GM12878 (cell line): ENCODE measurements at regions of chr2 and their contacts with region 1.

Region 1: GRCh38 chr2:218286570-218287459 is 5.5 kb downstream of the TMBIM1 start:
- DNase-seq: peak; percentile 72
- ATAC-seq: peak; percentile 76
- H3K4me3 ChIP-seq: peak overlapping the region; percentile 64
- H3K27ac ChIP-seq: peak overlapping the region; percentile 95
- H3K4me1 ChIP-seq: peaks cover 55% of the 10 kb centered on the region
- H3K27me3 ChIP-seq: no peaks in the 10 kb centered on the region
- CTCF ChIP-seq: no peak
- EP300 ChIP-seq: no peak
- POLR2A ChIP-seq: peak; percentile 57; the same call in 1 of the 2 replicates
- RAD21 ChIP-seq: no peak

Region 2: DNA sequence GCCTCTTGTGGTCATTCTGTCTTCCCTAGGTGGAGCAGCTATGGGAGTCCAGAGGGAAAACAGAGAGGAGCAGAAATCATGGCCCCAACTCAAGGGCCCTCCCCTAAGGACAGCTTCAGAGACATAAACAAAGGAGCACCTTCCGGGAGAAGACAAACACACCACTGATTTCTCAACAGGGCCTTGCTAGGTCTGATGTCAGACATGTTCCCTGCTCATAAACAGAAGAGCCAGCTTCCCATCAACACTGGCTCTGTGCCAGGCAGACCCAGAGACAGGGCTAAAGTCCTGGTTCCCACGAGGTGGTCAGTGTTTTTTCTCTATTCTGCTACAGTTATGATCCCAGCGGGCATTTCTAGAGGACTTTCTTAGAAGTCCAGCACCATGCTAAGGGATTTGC is 141.7 kb before region 1 on chr2:
- CTCF ChIA-PET with region 1: no interaction called
- POLR2A ChIA-PET with region 1: no interaction called
- RAD21 ChIA-PET with region 1: no interaction called
- SMC1A ChIA-PET with region 1: no interaction called
- in situ Hi-C with region 1: no loop called
- intact Hi-C with region 1: no loop called
- DNase-seq: no peak
- ATAC-seq: no peak
- H3K4me3 ChIP-seq: no peak overlapping the region
- H3K27ac ChIP-seq: no peak overlapping the region
- H3K4me1 ChIP-seq: peaks cover 1% of the 10 kb centered on the region
- H3K27me3 ChIP-seq: no peaks in the 10 kb centered on the region
- CTCF ChIP-seq: no peak
- EP300 ChIP-seq: no peak
- POLR2A ChIP-seq: no peak
- RAD21 ChIP-seq: no peak

Region 3: DNA sequence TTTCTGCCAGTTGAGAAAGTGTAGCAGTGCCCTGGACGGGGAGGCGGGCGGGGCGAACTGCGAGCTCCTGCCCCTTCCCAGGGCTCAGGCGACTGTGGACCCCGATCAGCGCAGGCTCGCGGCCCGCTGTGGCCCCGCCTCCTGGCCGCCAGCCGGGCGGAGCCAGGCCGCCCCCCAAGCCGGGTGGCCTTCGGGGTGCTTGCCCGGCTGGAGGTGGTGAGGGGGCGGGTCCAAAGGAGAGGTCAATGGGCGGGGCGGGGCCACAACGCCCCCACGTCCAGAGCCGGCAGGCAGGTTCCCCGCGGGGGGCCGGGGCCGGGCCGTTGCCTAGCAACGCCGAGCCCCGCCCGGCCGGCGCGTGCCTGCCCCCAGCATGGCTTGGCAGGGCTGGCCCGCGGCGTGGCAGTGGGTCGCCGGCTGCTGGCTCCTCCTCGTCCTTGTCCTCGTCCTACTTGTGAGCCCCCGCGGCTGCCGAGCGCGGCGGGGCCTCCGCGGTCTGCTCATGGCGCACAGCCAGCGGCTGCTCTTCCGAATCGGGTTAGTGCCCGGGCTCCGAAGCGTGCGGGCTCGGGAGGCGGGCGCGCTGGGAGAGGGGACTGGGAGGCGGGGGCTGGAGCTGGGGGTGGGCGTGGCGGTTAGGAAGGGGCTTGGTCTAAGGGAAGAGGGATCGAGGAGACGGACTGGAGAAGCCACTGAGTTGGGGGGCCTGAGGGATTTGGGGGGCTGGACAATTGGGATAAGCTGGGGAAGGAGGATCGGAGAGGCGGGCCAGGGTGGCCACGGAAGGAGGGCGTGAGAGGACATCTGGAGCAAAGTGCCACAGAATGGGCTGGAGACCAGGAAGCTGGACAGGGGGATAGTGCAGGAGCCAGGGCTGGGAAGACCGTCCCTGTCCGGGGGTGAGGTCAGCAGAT is 36.3 kb after region 1 on chr2:
- CTCF ChIA-PET with region 1: interaction called, 8 read pairs
- POLR2A ChIA-PET with region 1: interaction called, 17 read pairs
- RAD21 ChIA-PET with region 1: interaction called, 4 read pairs
- SMC1A ChIA-PET with region 1: interaction called, 5 read pairs
- in situ Hi-C with region 1: no loop called
- intact Hi-C with region 1: no loop called
- DNase-seq: no peak
- ATAC-seq: peak; percentile 87
- H3K4me3 ChIP-seq: peak overlapping the region; percentile 69
- H3K27ac ChIP-seq: no peak overlapping the region
- H3K4me1 ChIP-seq: peaks cover 15% of the 10 kb centered on the region
- H3K27me3 ChIP-seq: no peaks in the 10 kb centered on the region
- CTCF ChIP-seq: no peak
- EP300 ChIP-seq: no peak
- POLR2A ChIP-seq: peak; percentile 35; the same call in 1 of the 2 replicates
- RAD21 ChIP-seq: no peak

Region 4: GRCh38 chr2:218329027-218329825 is 42.4 kb after region 1 on chr2:
- CTCF ChIA-PET with region 1: interaction called, 7 read pairs
- POLR2A ChIA-PET with region 1: interaction called, 26 read pairs
- RAD21 ChIA-PET with region 1: interaction called, 9 read pairs
- SMC1A ChIA-PET with region 1: interaction called, 6 read pairs
- in situ Hi-C with region 1: no loop called
- intact Hi-C with region 1: no loop called
- DNase-seq: peak; percentile 77
- ATAC-seq: peak; percentile 81
- H3K4me3 ChIP-seq: peak overlapping the region; percentile 12; the same call in 1 of the 2 replicates
- H3K27ac ChIP-seq: peak overlapping the region; percentile 77
- H3K4me1 ChIP-seq: peaks cover 49% of the 10 kb centered on the region
- H3K27me3 ChIP-seq: no peaks in the 10 kb centered on the region
- CTCF ChIP-seq: no peak
- EP300 ChIP-seq: 0 out of 4 replicates have a peak, but pooled peaks of 1 of the 2 experiments have one; percentile 39
- POLR2A ChIP-seq: no peak
- RAD21 ChIP-seq: no peak